Left ventricle myocardium superior (tissue), 1 donor: ENCODE measurements at regions of chr9 and their contacts with region 1.

Region 1: GRCh38 chr9:19342947-19343346 is 37.1 kb downstream of the RPS6 start:
- DNase-seq: no peak
- ATAC-seq: no peak

Region 2: GRCh38 chr9:19102631-19103345 is 240.2 kb before region 1 on chr9 and contains the start of gene HAUS6:
- intact Hi-C with region 1: loop called (anchors 10 kb)
- DNase-seq: peak; percentile 97
- ATAC-seq: peak; percentile 100
- total RNA-seq, gene HAUS6: 5.6 TPM

Region 3: DNA sequence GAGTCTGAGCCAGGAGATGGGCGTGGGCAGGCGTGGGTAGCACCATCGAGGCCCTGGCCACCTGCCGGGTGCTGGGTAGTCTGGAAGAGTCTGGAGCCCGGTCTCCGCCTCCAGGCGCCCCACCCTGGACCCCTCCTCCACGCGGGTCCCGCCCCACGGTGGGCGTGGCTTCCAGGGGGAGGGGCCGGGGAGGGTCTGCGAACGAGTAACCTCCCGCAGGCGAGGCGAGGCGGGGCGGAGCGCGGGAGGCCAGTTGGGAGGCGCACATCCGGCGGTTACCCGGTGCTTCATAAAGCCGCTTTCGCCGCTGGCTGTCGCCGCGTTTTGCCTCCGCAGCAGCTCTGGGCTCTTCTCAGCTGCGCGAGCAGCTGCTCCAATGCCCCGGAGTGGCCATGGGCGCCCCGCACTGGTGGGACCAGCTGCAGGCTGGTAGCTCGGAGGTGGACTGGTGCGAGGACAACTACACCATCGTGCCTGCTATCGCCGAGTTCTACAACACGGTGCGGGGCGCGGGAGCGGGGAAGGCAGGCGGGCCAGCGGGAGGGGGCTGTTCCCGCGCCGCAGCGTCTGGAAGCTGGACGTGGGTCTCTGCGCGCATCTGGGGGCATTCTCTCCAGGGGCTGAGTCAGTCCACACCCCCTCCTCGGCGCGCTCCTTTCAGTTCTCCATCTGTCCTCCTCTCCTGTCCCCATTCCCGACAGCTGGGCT is 65.9 kb after region 1 on chr9 and contains the start of gene ACER2:
- intact Hi-C with region 1: loop called (anchors 10 kb)
- DNase-seq: peak; percentile 98
- ATAC-seq: peak; percentile 99
- total RNA-seq, gene ACER2: 3.4 TPM

Region 4: GRCh38 chr9:19598722-19599121 is 255.8 kb after region 1 on chr9:
- intact Hi-C with region 1: no loop called
- DNase-seq: no peak
- ATAC-seq: no peak